ENCODE measurements at regions of chr1 and their contacts with region 1.

Region 1: GRCh38 chr1:156129706-156130581 is 15.4 kb downstream of the LMNA start:
- DNase-seq: no peak
- H3K4me3 ChIP-seq: peak overlapping the region; percentile 23 to 35
- H3K27ac ChIP-seq: peak overlapping the region; percentile 97
- H3K4me1 ChIP-seq: peaks cover 63% of the 10 kb centered on the region
- H3K27me3 ChIP-seq: no peaks in the 10 kb centered on the region
- CTCF ChIP-seq: peak; percentile 95 to 99 (median 98)
- POLR2A ChIP-seq: peak in 1 of 2 donors; percentile 7

Region 2: GRCh38 chr1:156096640-156097391 is 33.1 kb before region 1 on chr1:
- intact Hi-C with region 1: loop called (anchors 2 kb)
- DNase-seq: no peak
- H3K4me3 ChIP-seq: peak overlapping the region in 1 of 2 donors; percentile 11
- H3K27ac ChIP-seq: peak overlapping the region; percentile 96
- H3K4me1 ChIP-seq: peaks cover 42% of the 10 kb centered on the region
- H3K27me3 ChIP-seq: no peaks in the 10 kb centered on the region
- CTCF ChIP-seq: peak; percentile 93 to 99 (median 97)
- POLR2A ChIP-seq: no peak

Region 3: DNA sequence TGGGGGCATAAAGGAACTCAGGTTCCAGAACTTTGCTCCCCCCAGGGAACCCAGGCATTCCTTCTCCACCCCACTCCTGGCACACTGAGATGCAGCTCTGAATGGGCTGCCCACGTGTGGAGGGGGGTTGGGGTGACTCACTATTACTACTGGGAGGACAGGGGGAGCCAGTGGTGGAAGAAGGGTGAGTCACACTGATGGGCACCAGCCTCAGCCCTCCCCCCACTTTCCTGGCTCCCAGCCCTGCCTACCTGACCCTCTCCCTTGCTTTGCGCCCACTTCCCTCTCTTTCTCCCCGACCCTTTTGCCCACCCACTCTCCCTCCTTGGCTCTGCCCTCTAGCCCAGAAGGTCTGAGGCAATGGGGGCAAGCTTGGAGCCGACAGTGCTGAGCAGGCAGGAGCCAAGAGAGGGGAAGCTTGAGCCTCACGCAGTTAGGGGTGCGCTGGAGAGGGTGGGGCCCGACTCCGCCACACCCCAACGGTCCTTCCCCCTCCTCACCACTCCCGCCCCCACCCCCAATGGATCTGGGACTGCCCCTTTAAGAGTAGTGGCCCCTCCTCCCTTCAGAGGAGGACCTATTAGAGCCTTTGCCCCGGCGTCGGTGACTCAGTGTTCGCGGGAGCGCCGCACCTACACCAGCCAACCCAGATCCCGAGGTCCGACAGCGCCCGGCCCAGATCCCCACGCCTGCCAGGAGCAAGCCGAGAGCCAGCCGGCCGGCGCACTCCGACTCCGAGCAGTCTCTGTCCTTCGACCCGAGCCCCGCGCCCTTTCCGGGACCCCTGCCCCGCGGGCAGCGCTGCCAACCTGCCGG is 15.6 kb before region 1 on chr1 and contains the start of gene LMNA:
- intact Hi-C with region 1: loop called (anchors 2 kb)
- DNase-seq: no peak
- H3K4me3 ChIP-seq: peak within 1 kb of the TSS; percentile 100
- H3K27ac ChIP-seq: peak within 1 kb of the TSS; percentile 97
- H3K4me1 ChIP-seq: peaks cover 62% of the 10 kb centered on the region
- H3K27me3 ChIP-seq: no peaks in the 10 kb centered on the region
- CTCF ChIP-seq: peak in 1 of 3 experiments; percentile 4
- POLR2A ChIP-seq: peak in 1 of 2 donors; percentile 100
- total RNA-seq, gene LMNA: 436 TPM

Region 4: DNA sequence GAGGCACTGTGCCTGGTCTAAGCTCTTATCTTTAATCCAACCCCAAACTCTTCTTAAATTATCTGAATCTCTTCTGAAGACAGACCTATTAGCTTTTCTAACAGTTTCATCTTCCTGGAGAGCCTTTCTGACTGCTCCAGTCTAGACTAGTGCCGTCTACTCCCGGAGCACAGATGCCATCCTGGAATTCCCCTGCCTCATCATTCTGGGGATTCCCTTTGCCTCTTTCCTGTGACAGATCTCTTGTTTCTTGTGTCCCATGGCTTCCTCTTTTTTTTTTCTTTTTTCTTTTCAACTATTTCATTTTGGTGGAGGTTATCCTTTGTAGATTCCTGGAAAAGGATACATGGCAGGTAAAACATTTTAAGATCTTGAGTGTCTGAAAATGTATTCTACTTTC is 35.1 kb after region 1 on chr1:
- intact Hi-C with region 1: no loop called
- DNase-seq: no peak
- H3K4me3 ChIP-seq: no peak overlapping the region
- H3K27ac ChIP-seq: no peak overlapping the region
- H3K4me1 ChIP-seq: peaks cover 17% of the 10 kb centered on the region
- H3K27me3 ChIP-seq: no peaks in the 10 kb centered on the region
- CTCF ChIP-seq: no peak
- POLR2A ChIP-seq: no peak

Region 5: DNA sequence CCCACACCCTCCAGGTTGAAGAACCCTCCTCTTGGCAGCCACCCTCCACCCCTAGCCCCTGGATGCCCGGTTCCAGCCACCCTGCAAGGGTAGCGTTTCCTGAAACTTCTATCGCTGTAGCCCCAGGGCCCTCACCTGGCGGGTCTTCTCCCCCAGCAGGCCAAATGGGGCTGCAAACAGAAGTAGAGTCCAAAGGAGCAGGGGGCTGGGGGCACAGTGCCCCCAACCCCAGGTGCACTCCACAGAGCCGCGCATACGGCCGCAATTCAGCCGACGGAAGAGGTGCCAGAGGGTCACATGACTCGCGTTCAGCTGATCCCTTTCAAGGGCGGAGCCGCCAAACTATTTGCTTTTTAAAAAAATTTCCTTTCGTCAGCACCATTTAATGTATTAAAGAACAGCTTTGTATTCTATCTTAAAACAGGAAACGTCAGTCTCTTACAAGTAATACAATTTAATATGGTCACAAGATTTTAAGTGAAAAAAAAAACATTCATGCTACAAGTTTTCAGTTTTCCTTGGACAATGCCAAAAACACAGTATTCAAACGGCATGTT is 165.5 kb after region 1 on chr1 and contains the start of gene GLMP:
- intact Hi-C with region 1: no loop called
- DNase-seq: no peak
- H3K4me3 ChIP-seq: peak within 1 kb of the TSS; percentile 58 to 91
- H3K27ac ChIP-seq: peak within 1 kb of the TSS; percentile 80
- H3K4me1 ChIP-seq: peaks cover 38% of the 10 kb centered on the region
- H3K27me3 ChIP-seq: no peaks in the 10 kb centered on the region
- CTCF ChIP-seq: no peak
- POLR2A ChIP-seq: no peak
- total RNA-seq, gene GLMP: 36.1 TPM